Activated CD4-positive, alpha-beta T cell treated with anti-CD3 and anti-CD28 coated beads for 36 hours (primary cell): ENCODE measurements at regions of chr18 and their contacts with region 1.

Region 1: GRCh38 chr18:59414111-59414653 is 55.1 kb upstream of the LMAN1 start:
- DNase-seq: no peak
- ATAC-seq: no peak
- H3K4me3 Mint-ChIP-seq: no peak overlapping the region
- H3K27ac Mint-ChIP-seq: no peak overlapping the region
- H3K4me1 Mint-ChIP-seq: no peaks in the 10 kb centered on the region
- H3K27me3 Mint-ChIP-seq: peaks cover 29% of the 10 kb centered on the region

Region 2: GRCh38 chr18:58639751-58640427 is 774.3 kb before region 1 on chr18:
- CTCF ChIA-PET with region 1: no interaction called
- POLR2A ChIA-PET with region 1: no interaction called
- intact Hi-C with region 1: no loop called
- DNase-seq: no peak
- ATAC-seq: peak; percentile 48
- H3K4me3 Mint-ChIP-seq: no peak overlapping the region
- H3K27ac Mint-ChIP-seq: no peak overlapping the region
- H3K4me1 Mint-ChIP-seq: peaks cover 26% of the 10 kb centered on the region
- H3K27me3 Mint-ChIP-seq: peaks cover 4% of the 10 kb centered on the region

Region 3: GRCh38 chr18:58900015-58900649 is 514.0 kb before region 1 on chr18:
- CTCF ChIA-PET with region 1: no interaction called
- POLR2A ChIA-PET with region 1: interaction called, 10 read pairs
- intact Hi-C with region 1: no loop called
- DNase-seq: no peak
- ATAC-seq: no peak
- H3K4me3 Mint-ChIP-seq: no peak overlapping the region
- H3K27ac Mint-ChIP-seq: no peak overlapping the region
- H3K4me1 Mint-ChIP-seq: peaks cover 15% of the 10 kb centered on the region
- H3K27me3 Mint-ChIP-seq: no peaks in the 10 kb centered on the region